Sigmoid colon (tissue), 7 donors: ENCODE measurements at regions of chr18 and their contacts with region 1.

Region 1: GRCh38 chr18:50507120-50507590 is 52.7 kb upstream of the MAPK4 start:
- DNase-seq: peak; percentile 72
- H3K4me3 ChIP-seq: no peak overlapping the region
- H3K27ac ChIP-seq: no peak overlapping the region
- H3K4me1 ChIP-seq: peaks cover 0 to 4% (median 3%) of the 10 kb centered on the region in 4 donors
- H3K27me3 ChIP-seq: no peaks in the 10 kb centered on the region
- CTCF ChIP-seq: peak in 3 of 4 experiments; percentile 52 to 70 (median 68)
- EP300 ChIP-seq: no peak
- POLR2A ChIP-seq: no peak

Region 2: DNA sequence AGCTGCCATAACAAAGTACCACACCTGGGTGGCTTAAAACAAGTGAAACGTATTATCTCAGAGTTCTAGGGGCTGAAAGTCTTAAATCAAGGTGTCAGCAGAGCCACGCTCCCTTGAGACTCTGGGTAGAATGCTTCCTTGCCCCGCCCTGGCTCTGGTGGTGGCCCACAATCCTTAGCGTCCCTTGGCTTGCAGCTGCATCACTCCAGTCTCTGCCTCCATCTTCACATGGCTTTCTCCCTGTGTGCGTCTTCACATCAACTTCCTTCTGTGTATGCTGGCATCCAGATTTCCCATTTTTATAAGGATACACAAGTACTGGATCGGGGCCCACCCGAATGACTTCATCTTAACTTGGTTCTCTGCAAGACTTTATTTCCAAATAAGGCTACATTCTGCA is 250.2 kb after region 1 on chr18:
- intact Hi-C with region 1: no loop called
- DNase-seq: peak; percentile 82
- H3K4me3 ChIP-seq: no peak overlapping the region
- H3K27ac ChIP-seq: peak overlapping the region in 1 of 4 donors; percentile 41
- H3K4me1 ChIP-seq: peaks cover 0 to 5% (median 0%) of the 10 kb centered on the region in 4 donors
- H3K27me3 ChIP-seq: no peaks in the 10 kb centered on the region
- CTCF ChIP-seq: no peak
- EP300 ChIP-seq: no peak
- POLR2A ChIP-seq: no peak

Region 3: GRCh38 chr18:50786864-50787263 is 279.7 kb after region 1 on chr18:
- intact Hi-C with region 1: loop called (anchors 1 kb)
- DNase-seq: no peak
- H3K4me3 ChIP-seq: no peak overlapping the region
- H3K27ac ChIP-seq: no peak overlapping the region
- H3K4me1 ChIP-seq: peaks cover 0 to 6% (median 0%) of the 10 kb centered on the region in 4 donors
- H3K27me3 ChIP-seq: no peaks in the 10 kb centered on the region
- CTCF ChIP-seq: no peak
- EP300 ChIP-seq: no peak
- POLR2A ChIP-seq: no peak

Region 4: DNA sequence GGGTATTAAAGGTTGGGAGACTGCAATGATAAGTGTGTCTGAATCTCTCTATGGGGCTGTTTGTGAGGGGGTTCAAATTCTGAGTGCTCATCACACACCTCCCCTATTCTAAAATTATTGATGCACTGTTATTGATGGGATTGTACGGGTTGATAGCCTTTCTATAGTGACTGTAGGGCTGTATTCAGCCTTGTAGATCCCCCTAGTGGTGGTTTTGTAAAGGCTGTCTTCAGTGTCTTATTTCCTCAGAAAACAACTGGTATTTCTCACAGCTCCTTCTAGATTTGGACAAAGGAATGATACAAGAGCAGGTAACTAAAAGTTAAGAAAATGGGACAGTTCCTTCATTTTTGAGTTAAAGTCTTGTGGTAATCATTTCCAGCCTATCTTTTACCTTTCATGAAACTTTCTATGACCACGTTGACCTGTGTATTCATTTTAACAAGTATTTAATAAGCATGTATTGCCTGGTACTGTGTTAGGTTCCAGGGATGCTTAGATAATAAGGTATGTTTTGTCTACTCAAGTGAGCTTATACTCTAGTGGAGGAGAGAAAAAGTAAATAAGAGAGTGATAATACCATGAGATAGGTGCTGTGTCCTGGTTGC is 544.1 kb after region 1 on chr18:
- intact Hi-C with region 1: loop called (anchors 10 kb)
- DNase-seq: no peak
- H3K4me3 ChIP-seq: no peak overlapping the region
- H3K27ac ChIP-seq: no peak overlapping the region
- H3K4me1 ChIP-seq: peaks cover 0 to 37% (median 13%) of the 10 kb centered on the region in 4 donors
- H3K27me3 ChIP-seq: no peaks in the 10 kb centered on the region
- CTCF ChIP-seq: peak; percentile 22 to 74 (median 62)
- EP300 ChIP-seq: no peak
- POLR2A ChIP-seq: no peak